ENCODE measurements at regions of chr5 and their contacts with region 1.

Region 1: GRCh38 chr5:176660860-176661641 is 13.8 kb downstream of the TSPAN17 start:
- DNase-seq: peak; percentile 92
- H3K4me3 ChIP-seq: no peak overlapping the region; a peak in 1 of 4 replicates
- H3K27ac ChIP-seq: no peak overlapping the region
- H3K4me1 ChIP-seq: peaks cover 0 to 23% of the 10 kb centered on the region in 2 experiments; a peak in 1 of 4 replicates
- H3K27me3 ChIP-seq: no peaks in the 10 kb centered on the region
- CTCF ChIP-seq: peak; percentile 92
- EP300 ChIP-seq: no peak
- RAD21 ChIP-seq: peak; percentile 97

Region 2: DNA sequence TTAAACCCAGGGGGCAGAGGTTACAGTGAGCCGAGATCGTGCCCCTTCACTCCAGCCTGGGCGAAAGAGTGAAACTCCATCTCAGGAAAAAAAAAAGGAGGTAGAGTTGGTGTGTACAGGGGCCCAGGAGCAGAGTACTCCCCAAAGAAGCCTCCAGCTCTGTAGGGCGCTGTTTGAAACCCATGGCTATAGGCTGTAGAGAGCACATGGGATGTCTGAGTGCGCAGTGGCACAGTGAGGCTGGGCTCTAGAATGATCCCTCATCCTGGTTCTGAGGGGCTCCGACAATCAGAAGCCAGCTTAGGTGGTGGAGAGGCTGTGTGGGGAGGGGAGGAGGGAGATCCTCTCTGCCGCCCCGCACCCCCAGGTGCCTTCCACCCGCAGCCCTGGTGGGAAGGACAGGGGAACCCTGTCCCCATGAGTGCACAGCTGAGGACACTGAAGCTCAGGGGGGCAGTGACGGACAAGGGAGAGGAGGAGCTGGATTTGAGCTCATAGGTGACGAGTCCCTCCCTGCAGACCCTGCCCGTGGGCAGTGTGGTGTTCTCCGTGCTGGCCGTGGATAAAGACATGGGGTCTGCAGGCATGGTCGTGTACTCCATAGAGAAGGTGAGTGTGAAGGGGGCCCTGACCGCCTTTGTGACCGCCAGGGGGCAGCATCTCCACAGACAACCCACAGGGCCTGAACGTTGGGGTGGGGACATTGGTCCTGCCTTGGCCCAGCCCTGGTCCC is 87.3 kb before region 1 on chr5:
- CTCF ChIA-PET with region 1: interaction called, 11 read pairs
- POLR2A ChIA-PET with region 1: no interaction called
- DNase-seq: peak; percentile 94
- H3K4me3 ChIP-seq: no peak overlapping the region
- H3K27ac ChIP-seq: no peak overlapping the region
- H3K4me1 ChIP-seq: no peaks in the 10 kb centered on the region; a peak in 1 of 4 replicates
- H3K27me3 ChIP-seq: peaks cover 4% of the 10 kb centered on the region; the same call in 1 of the 2 replicates
- CTCF ChIP-seq: peak; percentile 85
- EP300 ChIP-seq: no peak
- RAD21 ChIP-seq: peak; percentile 85

Region 3: GRCh38 chr5:176700239-176700847 is 39.3 kb after region 1 on chr5:
- CTCF ChIA-PET with region 1: interaction called, 25 read pairs
- POLR2A ChIA-PET with region 1: no interaction called
- DNase-seq: peak; percentile 85
- H3K4me3 ChIP-seq: no peak overlapping the region
- H3K27ac ChIP-seq: no peak overlapping the region
- H3K4me1 ChIP-seq: no peaks in the 10 kb centered on the region; a peak in 1 of 4 replicates
- H3K27me3 ChIP-seq: peaks cover 9% of the 10 kb centered on the region
- CTCF ChIP-seq: peak; percentile 31
- EP300 ChIP-seq: no peak
- RAD21 ChIP-seq: peak; percentile 79

Region 4: GRCh38 chr5:176803940-176804498 is 143.0 kb after region 1 on chr5:
- CTCF ChIA-PET with region 1: interaction called, 14 read pairs
- POLR2A ChIA-PET with region 1: interaction called, 5 read pairs
- DNase-seq: no peak
- H3K4me3 ChIP-seq: no peak overlapping the region
- H3K27ac ChIP-seq: peak overlapping the region in 1 of 2 experiments; percentile 85; a peak in 1 of 4 replicates
- H3K4me1 ChIP-seq: peaks cover 0 to 22% of the 10 kb centered on the region in 2 experiments; a peak in 1 of 4 replicates
- H3K27me3 ChIP-seq: peaks cover 5% of the 10 kb centered on the region; the same call in 1 of the 2 replicates
- CTCF ChIP-seq: no peak
- EP300 ChIP-seq: no peak
- RAD21 ChIP-seq: no peak

Region 5: DNA sequence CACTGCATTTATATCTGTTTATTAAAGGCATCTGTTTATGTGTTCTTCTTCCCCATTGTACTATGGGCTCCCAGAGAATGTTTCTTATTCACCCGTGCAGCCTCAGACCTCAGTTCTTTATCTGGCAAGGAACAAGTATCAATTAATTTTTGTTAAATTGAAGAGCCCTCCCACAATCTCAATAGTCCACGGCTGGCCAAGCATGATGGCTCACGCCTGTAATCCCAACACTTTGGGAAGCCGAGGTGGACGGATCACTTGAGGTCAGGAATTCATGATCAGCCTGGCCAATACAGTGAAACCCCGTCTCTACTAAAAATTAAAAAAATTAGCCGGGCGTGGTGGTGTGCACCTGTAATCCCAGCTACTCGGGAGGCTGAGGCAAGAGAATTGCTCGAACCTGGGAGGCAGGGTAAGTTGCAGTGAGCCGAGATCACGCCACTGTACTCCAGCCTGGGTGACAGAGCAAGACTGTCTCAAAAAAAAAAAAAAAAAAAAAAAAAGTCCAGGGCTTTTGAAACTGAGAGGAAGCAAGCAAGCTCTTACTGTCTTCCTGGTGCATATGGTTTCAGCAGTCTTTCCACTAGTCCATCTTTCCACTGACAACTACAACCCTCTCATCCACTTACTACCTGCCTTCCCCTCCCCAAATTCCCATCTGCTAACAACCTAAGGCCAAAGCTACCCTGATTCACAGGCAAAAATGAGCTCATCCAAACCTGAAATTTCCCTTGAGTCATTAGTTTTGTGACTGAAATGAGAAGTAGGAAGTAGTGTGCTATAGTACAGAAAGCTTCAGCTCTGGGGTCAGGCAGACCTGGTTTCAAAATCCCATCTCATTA is 240.4 kb after region 1 on chr5:
- CTCF ChIA-PET with region 1: interaction called, 12 read pairs
- POLR2A ChIA-PET with region 1: no interaction called
- DNase-seq: no peak
- H3K4me3 ChIP-seq: no peak overlapping the region
- H3K27ac ChIP-seq: no peak overlapping the region
- H3K4me1 ChIP-seq: peaks cover 0 to 10% of the 10 kb centered on the region in 2 experiments; a peak in 1 of 4 replicates
- H3K27me3 ChIP-seq: no peaks in the 10 kb centered on the region
- CTCF ChIP-seq: no peak
- EP300 ChIP-seq: no peak
- RAD21 ChIP-seq: no peak

Region 6: GRCh38 chr5:176979669-176980068 is 318.6 kb after region 1 on chr5:
- CTCF ChIA-PET with region 1: interaction called, 12 read pairs
- POLR2A ChIA-PET with region 1: no interaction called
- DNase-seq: no peak
- H3K4me3 ChIP-seq: no peak overlapping the region
- H3K27ac ChIP-seq: no peak overlapping the region
- H3K4me1 ChIP-seq: no peaks in the 10 kb centered on the region
- H3K27me3 ChIP-seq: no peaks in the 10 kb centered on the region
- CTCF ChIP-seq: no peak
- EP300 ChIP-seq: no peak
- RAD21 ChIP-seq: no peak

Region 7: GRCh38 chr5:177113566-177114424 is 452.7 kb after region 1 on chr5:
- CTCF ChIA-PET with region 1: interaction called, 91 read pairs
- POLR2A ChIA-PET with region 1: no interaction called
- DNase-seq: peak; percentile 89
- H3K4me3 ChIP-seq: no peak overlapping the region; a peak in 1 of 4 replicates
- H3K27ac ChIP-seq: no peak overlapping the region
- H3K4me1 ChIP-seq: no peaks in the 10 kb centered on the region; a peak in 1 of 4 replicates
- H3K27me3 ChIP-seq: no peaks in the 10 kb centered on the region
- CTCF ChIP-seq: peak; percentile 99
- EP300 ChIP-seq: no peak
- RAD21 ChIP-seq: peak; percentile 99